CD14-positive monocyte (primary cell): ENCODE measurements at regions of chr11 and their contacts with region 1.

Region 1: DNA sequence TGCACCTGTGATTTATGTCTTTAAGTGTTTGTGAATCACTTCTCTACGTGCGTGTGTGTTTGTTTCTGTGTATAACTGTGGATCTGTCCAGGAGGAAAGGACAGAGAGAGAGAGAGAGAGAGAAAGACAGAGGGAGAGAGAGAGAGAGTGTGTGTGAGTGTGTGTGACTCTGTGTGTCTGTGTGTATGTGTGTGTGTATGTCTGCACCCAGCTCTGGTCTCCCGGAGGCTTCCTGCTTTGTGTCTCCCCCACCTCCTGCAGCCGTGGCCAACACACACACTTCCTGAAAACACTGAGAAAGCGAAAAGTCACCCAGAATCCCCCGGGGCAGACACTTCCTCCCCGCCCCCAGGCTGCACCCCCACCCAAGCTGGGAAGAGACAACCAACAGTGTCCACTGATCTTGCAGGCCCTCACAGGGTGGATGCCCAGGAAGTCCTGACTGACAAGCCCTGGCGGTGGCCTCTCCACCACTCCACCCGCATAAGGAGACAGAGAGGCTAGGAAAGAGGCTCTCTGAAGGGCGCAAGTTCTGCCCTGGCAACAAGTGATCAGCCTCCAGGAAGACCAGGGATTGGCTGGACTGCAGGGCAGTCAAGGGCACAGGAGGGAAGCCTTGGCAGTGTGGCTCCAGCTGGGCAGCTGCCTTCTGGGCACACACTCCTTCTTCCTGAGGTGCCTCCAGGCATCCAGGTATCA is 30.0 kb downstream of the ARAP1 start:
- DNase-seq: peak; percentile 92 to 96 (median 94)
- H3K4me3 ChIP-seq: peak overlapping the region; percentile 64 to 85 (median 66)
- H3K4me3 Mint-ChIP-seq: peak overlapping the region; percentile 90 to 99
- H3K27ac ChIP-seq: peak overlapping the region; percentile 75 to 85
- H3K27ac Mint-ChIP-seq: peak overlapping the region; percentile 88 to 98 (median 96)
- H3K4me1 ChIP-seq: peaks cover 90 to 98% of the 10 kb centered on the region in 2 donors
- H3K4me1 Mint-ChIP-seq: peaks cover 93% of the 10 kb centered on the region
- H3K27me3 ChIP-seq: no peaks in the 10 kb centered on the region
- H3K27me3 Mint-ChIP-seq: peaks cover 0 to 2% (median 0%) of the 10 kb centered on the region in 3 donors
- CTCF ChIP-seq: no peak

Region 2: GRCh38 chr11:72598906-72599305 is 123.3 kb before region 1 on chr11:
- intact Hi-C with region 1: no loop called
- DNase-seq: peak in 1 of 3 donors; percentile 17
- H3K4me3 ChIP-seq: no peak overlapping the region
- H3K4me3 Mint-ChIP-seq: peak overlapping the region in 1 of 2 donors; percentile 24
- H3K27ac ChIP-seq: no peak overlapping the region
- H3K27ac Mint-ChIP-seq: peak overlapping the region in 2 of 7 donors; percentile 27 to 38
- H3K4me1 ChIP-seq: no peaks in the 10 kb centered on the region
- H3K4me1 Mint-ChIP-seq: peaks cover 12% of the 10 kb centered on the region
- H3K27me3 ChIP-seq: peaks cover 0 to 52% of the 10 kb centered on the region in 2 donors
- H3K27me3 Mint-ChIP-seq: peaks cover 40 to 80% (median 59%) of the 10 kb centered on the region in 3 donors
- CTCF ChIP-seq: peak; percentile 45

Region 3: DNA sequence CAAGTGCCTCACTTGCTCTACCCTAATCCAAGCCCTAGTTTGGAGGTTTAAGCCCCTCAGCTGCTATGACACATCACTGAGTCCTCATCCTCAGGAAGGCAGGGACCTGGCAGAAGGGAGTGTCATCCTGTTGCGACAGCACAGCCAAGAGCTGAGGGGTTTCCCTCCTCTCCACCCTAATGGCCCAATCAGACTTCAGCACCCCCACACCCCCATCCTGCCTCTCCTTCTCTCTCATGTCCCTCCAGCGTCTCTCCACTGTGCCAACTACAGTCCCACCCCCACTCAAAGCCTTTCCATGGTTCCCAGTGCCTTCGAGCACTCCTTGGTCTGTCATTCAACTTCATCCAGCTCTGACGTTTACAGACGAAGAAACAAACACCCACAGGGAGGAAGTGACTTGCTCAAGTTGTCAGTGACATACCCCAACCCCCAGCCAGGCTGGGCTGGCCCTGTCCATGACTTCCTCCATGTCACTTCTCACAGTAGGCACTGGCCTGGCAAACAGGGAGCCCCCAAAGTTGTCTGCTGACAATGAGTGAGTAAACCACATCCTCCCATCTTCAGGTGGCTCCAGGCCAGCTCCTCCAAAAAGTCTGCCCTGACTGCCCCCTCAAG is 14.4 kb after region 1 on chr11:
- intact Hi-C with region 1: loop called in 1 of 2 experiments (anchors 2 kb)
- DNase-seq: peak; percentile 97 to 99 (median 98)
- H3K4me3 ChIP-seq: peak overlapping the region; percentile 33 to 88 (median 83)
- H3K4me3 Mint-ChIP-seq: peak overlapping the region; percentile 97 to 99
- H3K27ac ChIP-seq: peak overlapping the region; percentile 98 to 99
- H3K27ac Mint-ChIP-seq: peak overlapping the region; percentile 100
- H3K4me1 ChIP-seq: peaks cover 93 to 94% of the 10 kb centered on the region in 2 donors
- H3K4me1 Mint-ChIP-seq: peaks cover 87% of the 10 kb centered on the region
- H3K27me3 ChIP-seq: no peaks in the 10 kb centered on the region
- H3K27me3 Mint-ChIP-seq: peaks cover 0 to 4% (median 2%) of the 10 kb centered on the region in 3 donors
- CTCF ChIP-seq: no peak

Region 4: DNA sequence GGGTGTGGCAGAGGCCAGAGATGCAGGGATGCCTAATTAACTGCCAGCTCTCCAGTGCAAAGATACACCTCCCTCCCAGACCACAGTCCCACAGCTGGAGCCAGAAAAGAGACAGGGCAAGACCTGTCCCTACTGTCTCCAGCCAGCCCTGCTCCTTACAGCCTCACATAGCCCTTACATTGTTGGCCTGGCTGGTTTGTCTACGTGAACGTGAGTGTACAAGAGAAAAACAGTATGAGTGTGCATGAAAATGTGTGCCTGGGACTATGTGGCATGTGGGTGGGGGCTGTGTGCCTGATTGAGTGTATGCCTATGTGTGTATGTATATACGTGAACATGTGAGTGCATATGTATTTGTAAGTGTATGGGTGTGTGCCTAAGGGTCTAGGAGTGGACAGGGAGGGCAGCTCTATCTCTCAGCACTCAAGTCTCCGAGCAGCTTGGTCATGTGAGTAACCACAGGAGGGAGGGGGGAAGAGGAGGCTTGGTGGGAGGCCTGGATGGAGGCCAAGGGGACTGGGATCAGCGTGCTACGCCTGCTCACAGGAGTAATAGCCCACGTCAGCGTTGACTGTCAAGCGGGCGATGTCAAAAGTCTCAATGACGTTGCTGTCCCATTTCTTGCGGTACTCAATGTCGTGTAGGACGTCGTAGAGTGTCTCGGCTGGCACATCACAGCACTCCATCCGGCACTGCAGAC is 36.6 kb after region 1 on chr11:
- intact Hi-C with region 1: loop called in 1 of 2 experiments (anchors 5 kb)
- DNase-seq: peak; percentile 73 to 87 (median 76)
- H3K4me3 ChIP-seq: no peak overlapping the region
- H3K4me3 Mint-ChIP-seq: peak overlapping the region; percentile 25 to 29
- H3K27ac ChIP-seq: peak overlapping the region in 1 of 2 donors; percentile 44
- H3K27ac Mint-ChIP-seq: peak overlapping the region; percentile 69 to 94 (median 82)
- H3K4me1 ChIP-seq: peaks cover 17 to 36% of the 10 kb centered on the region in 2 donors
- H3K4me1 Mint-ChIP-seq: peaks cover 53% of the 10 kb centered on the region
- H3K27me3 ChIP-seq: no peaks in the 10 kb centered on the region
- H3K27me3 Mint-ChIP-seq: peaks cover 5 to 11% (median 11%) of the 10 kb centered on the region in 3 donors
- CTCF ChIP-seq: no peak

Region 5: GRCh38 chr11:72787216-72788104 is 65.3 kb after region 1 on chr11:
- intact Hi-C with region 1: loop called in 1 of 2 experiments (anchors 5 kb)
- DNase-seq: peak in 2 of 3 donors; percentile 69 to 70
- H3K4me3 ChIP-seq: peak overlapping the region in 1 of 3 experiments; percentile 51
- H3K4me3 Mint-ChIP-seq: peak overlapping the region in 1 of 2 donors; percentile 55
- H3K27ac ChIP-seq: peak overlapping the region; percentile 77 to 78
- H3K27ac Mint-ChIP-seq: peak overlapping the region; percentile 89 to 98 (median 91)
- H3K4me1 ChIP-seq: peaks cover 40 to 43% of the 10 kb centered on the region in 2 donors
- H3K4me1 Mint-ChIP-seq: peaks cover 45% of the 10 kb centered on the region
- H3K27me3 ChIP-seq: peaks cover 0 to 4% of the 10 kb centered on the region in 2 donors
- H3K27me3 Mint-ChIP-seq: peaks cover 4 to 5% (median 5%) of the 10 kb centered on the region in 3 donors
- CTCF ChIP-seq: peak; percentile 29

Region 6: DNA sequence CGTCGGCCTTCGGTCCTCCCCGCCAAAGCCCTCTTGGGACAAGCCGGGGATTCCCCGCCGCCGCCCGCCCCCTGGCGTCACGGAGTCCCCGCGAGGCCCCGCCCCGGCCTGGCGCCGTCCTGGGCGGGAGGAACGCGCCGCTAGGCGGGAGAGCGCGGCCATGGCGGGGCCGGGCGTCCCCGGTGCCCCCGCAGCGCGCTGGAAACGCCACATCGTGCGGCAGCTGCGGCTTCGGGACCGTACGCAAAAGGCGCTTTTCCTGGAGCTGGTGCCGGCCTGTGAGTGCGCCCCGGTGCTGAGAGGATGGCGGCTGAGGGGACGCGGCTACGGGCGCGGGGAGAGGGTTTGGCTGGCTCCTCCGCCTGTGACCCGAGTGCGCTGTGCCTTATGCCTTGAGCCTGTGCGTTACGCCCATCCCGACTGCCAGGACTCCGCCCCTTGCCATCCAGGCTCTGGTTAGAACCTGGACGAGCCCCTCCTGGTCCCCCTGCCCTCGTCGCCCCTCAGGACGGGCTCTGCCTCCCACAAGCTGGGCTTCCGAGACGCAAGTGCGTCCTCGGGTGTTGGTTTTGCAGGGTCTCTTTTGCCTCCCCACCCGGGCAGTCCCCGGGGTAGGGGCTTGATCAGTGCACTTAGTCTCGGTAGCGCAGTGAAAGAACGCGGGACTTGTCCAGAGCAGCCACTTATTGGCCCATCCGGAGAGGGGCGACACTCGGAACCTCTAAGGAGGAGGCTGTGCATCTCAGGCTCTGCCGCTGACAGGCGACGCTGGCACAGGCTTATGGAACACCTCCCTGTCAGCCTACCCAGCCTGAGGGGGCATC is 92.3 kb after region 1 on chr11 and contains the start of gene ATG16L2:
- intact Hi-C with region 1: loop called (anchors 2 to 5 kb)
- DNase-seq: peak; percentile 74 to 86 (median 80)
- H3K4me3 ChIP-seq: peak within 1 kb of the TSS; percentile 73 to 100 (median 99)
- H3K4me3 Mint-ChIP-seq: peak within 1 kb of the TSS; percentile 99 to 100
- H3K27ac ChIP-seq: peak within 1 kb of the TSS; percentile 98
- H3K27ac Mint-ChIP-seq: peak within 1 kb of the TSS; percentile 98 to 100 (median 99)
- H3K4me1 ChIP-seq: peaks cover 46 to 70% of the 10 kb centered on the region in 2 donors
- H3K4me1 Mint-ChIP-seq: peaks cover 65% of the 10 kb centered on the region
- H3K27me3 ChIP-seq: no peaks in the 10 kb centered on the region
- H3K27me3 Mint-ChIP-seq: peaks cover 0 to 5% (median 3%) of the 10 kb centered on the region in 3 donors
- CTCF ChIP-seq: no peak
- polyA plus RNA-seq, gene ATG16L2: 36.9 to 975 (median 46.8) TPM